CD14-positive monocyte (primary cell): ENCODE measurements at regions of chr6 and their contacts with region 1.

Region 1: GRCh38 chr6:135145063-135145800 is 35.9 kb upstream of the MYB start:
- DNase-seq: peak in 2 of 3 donors; percentile 34 to 43
- H3K4me3 ChIP-seq: peak overlapping the region; percentile 65 to 99 (median 83)
- H3K4me3 Mint-ChIP-seq: peak overlapping the region; percentile 71 to 89
- H3K27ac ChIP-seq: peak overlapping the region in 1 of 2 donors; percentile 83
- H3K27ac Mint-ChIP-seq: peak overlapping the region; percentile 54 to 93 (median 84)
- H3K4me1 ChIP-seq: peaks cover 27 to 35% of the 10 kb centered on the region in 2 donors
- H3K4me1 Mint-ChIP-seq: peaks cover 51% of the 10 kb centered on the region
- H3K27me3 ChIP-seq: no peaks in the 10 kb centered on the region
- H3K27me3 Mint-ChIP-seq: no peaks in the 10 kb centered on the region
- CTCF ChIP-seq: peak; percentile 82

Region 2: GRCh38 chr6:134468633-134469032 is 676.6 kb before region 1 on chr6:
- intact Hi-C with region 1: no loop called
- DNase-seq: no peak
- H3K4me3 ChIP-seq: no peak overlapping the region
- H3K4me3 Mint-ChIP-seq: no peak overlapping the region
- H3K27ac ChIP-seq: no peak overlapping the region
- H3K27ac Mint-ChIP-seq: no peak overlapping the region
- H3K4me1 ChIP-seq: peaks cover 5 to 8% of the 10 kb centered on the region in 2 donors
- H3K4me1 Mint-ChIP-seq: peaks cover 12% of the 10 kb centered on the region
- H3K27me3 ChIP-seq: no peaks in the 10 kb centered on the region
- H3K27me3 Mint-ChIP-seq: peaks cover 1 to 3% (median 1%) of the 10 kb centered on the region in 3 donors
- CTCF ChIP-seq: no peak

Region 3: GRCh38 chr6:135114355-135115145 is 30.7 kb before region 1 on chr6:
- intact Hi-C with region 1: no loop called
- DNase-seq: no peak
- H3K4me3 ChIP-seq: no peak overlapping the region
- H3K4me3 Mint-ChIP-seq: no peak overlapping the region
- H3K27ac ChIP-seq: no peak overlapping the region
- H3K27ac Mint-ChIP-seq: no peak overlapping the region
- H3K4me1 ChIP-seq: peaks cover 9 to 10% of the 10 kb centered on the region in 2 donors
- H3K4me1 Mint-ChIP-seq: peaks cover 23% of the 10 kb centered on the region
- H3K27me3 ChIP-seq: no peaks in the 10 kb centered on the region
- H3K27me3 Mint-ChIP-seq: no peaks in the 10 kb centered on the region
- CTCF ChIP-seq: no peak

Region 4: GRCh38 chr6:135360222-135360621 is 215.0 kb after region 1 on chr6:
- intact Hi-C with region 1: no loop called
- DNase-seq: no peak
- H3K4me3 ChIP-seq: no peak overlapping the region
- H3K4me3 Mint-ChIP-seq: no peak overlapping the region
- H3K27ac ChIP-seq: no peak overlapping the region
- H3K27ac Mint-ChIP-seq: no peak overlapping the region
- H3K4me1 ChIP-seq: no peaks in the 10 kb centered on the region
- H3K4me1 Mint-ChIP-seq: peaks cover 2% of the 10 kb centered on the region
- H3K27me3 ChIP-seq: no peaks in the 10 kb centered on the region
- H3K27me3 Mint-ChIP-seq: no peaks in the 10 kb centered on the region
- CTCF ChIP-seq: no peak

Region 5: GRCh38 chr6:135411339-135411738 is 266.1 kb after region 1 on chr6:
- intact Hi-C with region 1: loop called in 1 of 2 experiments (anchors 10 kb)
- DNase-seq: no peak
- H3K4me3 ChIP-seq: no peak overlapping the region
- H3K4me3 Mint-ChIP-seq: no peak overlapping the region
- H3K27ac ChIP-seq: no peak overlapping the region
- H3K27ac Mint-ChIP-seq: no peak overlapping the region
- H3K4me1 ChIP-seq: no peaks in the 10 kb centered on the region
- H3K4me1 Mint-ChIP-seq: peaks cover 4% of the 10 kb centered on the region
- H3K27me3 ChIP-seq: no peaks in the 10 kb centered on the region
- H3K27me3 Mint-ChIP-seq: no peaks in the 10 kb centered on the region
- CTCF ChIP-seq: peak; percentile 24

Region 6: GRCh38 chr6:135423649-135424128 is 278.5 kb after region 1 on chr6:
- intact Hi-C with region 1: loop called (anchors 10 kb)
- DNase-seq: peak; percentile 30 to 64 (median 41)
- H3K4me3 ChIP-seq: no peak overlapping the region
- H3K4me3 Mint-ChIP-seq: no peak overlapping the region
- H3K27ac ChIP-seq: no peak overlapping the region
- H3K27ac Mint-ChIP-seq: peak overlapping the region in 2 of 7 donors; percentile 65 to 81
- H3K4me1 ChIP-seq: peaks cover 12 to 27% of the 10 kb centered on the region in 2 donors
- H3K4me1 Mint-ChIP-seq: peaks cover 16% of the 10 kb centered on the region
- H3K27me3 ChIP-seq: no peaks in the 10 kb centered on the region
- H3K27me3 Mint-ChIP-seq: no peaks in the 10 kb centered on the region
- CTCF ChIP-seq: peak; percentile 88